ENCODE measurements at regions of chr1 and their contacts with region 1.

Region 1: GRCh38 chr1:8604041-8604945 is 213.1 kb downstream of the RERE start:
- DNase-seq: peak; percentile 85
- H3K4me3 Mint-ChIP-seq: peak overlapping the region; percentile 75
- H3K27ac Mint-ChIP-seq: peak overlapping the region; percentile 93
- H3K4me1 Mint-ChIP-seq: peaks cover 33% of the 10 kb centered on the region
- H3K27me3 Mint-ChIP-seq: no peaks in the 10 kb centered on the region

Region 2: DNA sequence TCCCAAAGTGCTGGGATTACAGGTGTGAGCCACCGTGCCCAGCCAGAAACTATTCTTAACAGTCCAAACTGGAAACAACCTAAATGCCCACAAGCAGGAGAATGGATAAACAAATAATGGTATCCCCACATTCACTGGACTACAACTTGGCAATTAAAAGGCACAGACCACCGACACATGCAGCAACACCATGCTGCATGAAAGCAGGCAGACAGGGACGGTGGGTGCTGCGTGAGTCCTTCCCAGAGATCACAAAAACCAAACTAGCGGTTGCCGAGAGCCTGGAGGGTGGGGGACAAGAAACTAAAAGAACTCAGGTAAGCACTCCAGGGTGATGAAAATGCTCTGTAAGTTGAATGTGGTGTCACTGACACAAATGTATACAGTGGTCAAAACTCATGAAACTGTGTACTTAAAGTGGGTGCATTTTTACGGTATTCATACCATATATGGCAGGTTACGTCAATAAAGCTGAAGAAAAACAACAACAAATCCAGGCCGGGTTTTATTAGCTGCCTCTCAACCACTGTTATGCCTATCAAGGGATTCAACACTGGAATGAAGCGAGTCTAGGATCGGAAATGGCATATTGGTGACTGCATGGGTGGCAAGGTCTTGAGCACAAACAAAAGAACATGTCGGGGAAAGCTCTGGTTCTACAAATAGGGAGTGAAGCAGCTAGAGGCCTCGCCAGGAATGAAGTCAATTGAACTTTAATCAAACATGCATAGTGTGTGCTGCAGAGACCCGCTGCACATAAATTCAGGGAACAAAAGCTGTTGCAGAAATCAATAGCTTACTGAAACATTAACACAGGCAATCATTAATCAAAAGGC is 234.0 kb before region 1 on chr1:
- intact Hi-C with region 1: no loop called
- DNase-seq: no peak
- H3K4me3 Mint-ChIP-seq: no peak overlapping the region
- H3K27ac Mint-ChIP-seq: no peak overlapping the region
- H3K4me1 Mint-ChIP-seq: peaks cover 19% of the 10 kb centered on the region
- H3K27me3 Mint-ChIP-seq: no peaks in the 10 kb centered on the region

Region 3: DNA sequence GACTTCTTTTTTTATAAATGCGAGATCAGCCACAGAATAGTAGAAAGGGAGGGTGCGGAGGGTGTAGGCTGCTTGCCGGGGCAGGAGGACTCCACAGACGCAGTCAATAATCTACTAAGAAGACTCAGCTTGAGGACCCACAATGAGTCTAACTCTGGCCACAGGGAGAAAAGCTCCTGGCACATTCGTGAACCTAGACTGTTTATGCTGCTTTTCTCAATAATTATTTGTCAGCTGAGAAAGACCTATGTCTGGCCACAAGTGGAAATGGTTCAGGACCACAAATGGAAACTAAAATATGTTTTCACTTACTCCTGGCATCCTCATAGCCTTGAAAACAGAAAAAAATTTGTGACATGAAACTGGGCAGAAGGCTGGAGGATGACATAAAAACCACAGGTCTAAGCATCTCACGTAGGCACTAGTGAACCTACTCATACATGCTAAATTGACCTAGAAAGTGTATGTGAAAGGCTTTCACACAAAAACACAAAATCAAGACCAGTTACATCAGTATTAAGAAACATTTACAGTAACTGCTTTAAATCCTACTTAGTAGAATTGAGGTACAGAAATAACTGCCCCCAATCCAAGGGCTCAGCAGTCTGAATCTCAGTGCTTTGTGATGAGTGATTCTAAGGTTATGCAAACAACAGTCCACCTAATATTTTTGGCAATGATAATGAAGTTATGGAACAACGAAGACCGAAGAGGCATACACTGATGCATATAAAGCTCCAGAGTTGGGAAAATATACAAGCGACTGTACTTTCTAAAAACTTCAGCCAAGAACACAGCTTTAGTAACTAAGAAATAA is 126.9 kb before region 1 on chr1:
- intact Hi-C with region 1: loop called (anchors 1 kb)
- DNase-seq: peak; percentile 68
- H3K4me3 Mint-ChIP-seq: peak overlapping the region; percentile 54
- H3K27ac Mint-ChIP-seq: peak overlapping the region; percentile 71
- H3K4me1 Mint-ChIP-seq: peaks cover 49% of the 10 kb centered on the region
- H3K27me3 Mint-ChIP-seq: no peaks in the 10 kb centered on the region

Region 4: GRCh38 chr1:8560611-8561544 is 43.4 kb before region 1 on chr1:
- intact Hi-C with region 1: loop called (anchors 2 kb)
- DNase-seq: peak; percentile 78
- H3K4me3 Mint-ChIP-seq: peak overlapping the region; percentile 60
- H3K27ac Mint-ChIP-seq: peak overlapping the region; percentile 87
- H3K4me1 Mint-ChIP-seq: peaks cover 33% of the 10 kb centered on the region
- H3K27me3 Mint-ChIP-seq: no peaks in the 10 kb centered on the region

Region 5: GRCh38 chr1:8649027-8649426 is 44.7 kb after region 1 on chr1:
- intact Hi-C with region 1: loop called (anchors 1 kb)
- DNase-seq: no peak
- H3K4me3 Mint-ChIP-seq: peak overlapping the region; percentile 35
- H3K27ac Mint-ChIP-seq: peak overlapping the region; percentile 62
- H3K4me1 Mint-ChIP-seq: peaks cover 45% of the 10 kb centered on the region
- H3K27me3 Mint-ChIP-seq: no peaks in the 10 kb centered on the region

Region 6: GRCh38 chr1:8671306-8671917 is 67.1 kb after region 1 on chr1:
- intact Hi-C with region 1: loop called (anchors 2 kb)
- DNase-seq: peak; percentile 75
- H3K4me3 Mint-ChIP-seq: no peak overlapping the region
- H3K27ac Mint-ChIP-seq: no peak overlapping the region
- H3K4me1 Mint-ChIP-seq: peaks cover 40% of the 10 kb centered on the region
- H3K27me3 Mint-ChIP-seq: no peaks in the 10 kb centered on the region

Measured in activated CD4-positive, alpha-beta T cell treated with anti-CD3 and anti-CD28 coated beads, Interleukin-2, amount 10 ng/mL, durations not matched to agents 24 days and 14 days (primary cell).